ENCODE measurements at regions of chr2 and their contacts with region 1.

Region 1: DNA sequence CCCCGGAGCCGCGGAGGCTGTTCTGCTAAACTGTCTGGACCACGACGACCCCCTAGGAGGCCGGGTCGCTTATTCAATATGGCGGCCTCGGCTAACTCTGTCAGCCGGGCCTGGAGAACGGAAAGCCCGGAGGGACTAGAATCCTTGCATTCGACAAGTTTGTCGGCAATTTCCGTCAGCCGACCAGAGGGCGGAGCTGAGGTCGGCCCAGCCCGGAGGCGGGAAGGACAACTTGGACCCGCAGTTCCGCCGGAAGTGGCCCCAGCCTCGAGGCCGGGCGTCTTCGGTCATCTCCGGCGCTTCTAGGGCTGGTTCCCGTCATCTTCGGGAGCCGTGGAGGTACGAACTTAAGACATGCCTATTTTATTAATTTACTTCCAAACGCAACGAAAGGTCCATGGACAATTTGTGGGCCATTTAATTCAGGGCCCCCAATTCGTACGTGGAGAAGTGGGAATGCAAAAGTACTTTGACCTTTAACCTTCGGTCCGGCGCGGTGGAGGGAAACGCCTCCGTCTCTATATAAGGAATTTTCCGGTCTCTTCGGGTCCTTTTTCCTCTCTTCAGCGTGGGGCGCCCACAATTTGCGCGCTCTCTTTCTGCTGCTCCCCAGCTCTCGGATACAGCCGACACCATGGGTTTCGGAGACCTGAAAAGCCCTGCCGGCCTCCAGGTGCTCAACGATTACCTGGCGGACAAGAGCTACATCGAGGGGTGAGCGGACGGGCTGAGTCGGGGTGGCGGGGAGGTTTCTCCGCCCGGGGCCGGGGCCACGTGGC is at the starts of genes EEF1B2 and NDUFS1:
- DNase-seq: peak; percentile 99
- H3K4me3 ChIP-seq: peak within 1 kb of the TSS; percentile 72 to 97 (median 96)
- H3K27ac ChIP-seq: peak within 1 kb of the TSS; percentile 67
- H3K4me1 ChIP-seq: peaks cover 27% of the 10 kb centered on the region
- H3K27me3 ChIP-seq: no peaks in the 10 kb centered on the region
- CTCF ChIP-seq: no peak
- POLR2A ChIP-seq: peak; percentile 89
- total RNA-seq, gene EEF1B2: 558 and 576 TPM in 2 replicates
- total RNA-seq, gene NDUFS1: 93.2 and 95.5 TPM in 2 replicates

Region 2: GRCh38 chr2:205998583-205998982 is 161.0 kb before region 1 on chr2:
- CTCF ChIA-PET with region 1: no interaction called
- POLR2A ChIA-PET with region 1: no interaction called
- dilution Hi-C with region 1: no loop called
- intact Hi-C with region 1: loop called (anchors 2 kb)
- DNase-seq: no peak
- H3K4me3 ChIP-seq: no peak overlapping the region
- H3K27ac ChIP-seq: no peak overlapping the region
- H3K4me1 ChIP-seq: no peaks in the 10 kb centered on the region
- H3K27me3 ChIP-seq: no peaks in the 10 kb centered on the region
- CTCF ChIP-seq: no peak
- POLR2A ChIP-seq: no peak

Region 3: GRCh38 chr2:206260188-206261012 is 100.9 kb after region 1 on chr2:
- CTCF ChIA-PET with region 1: interaction called, 4 read pairs
- POLR2A ChIA-PET with region 1: no interaction called
- dilution Hi-C with region 1: no loop called
- intact Hi-C with region 1: loop called (anchors 1 kb)
- DNase-seq: no peak
- H3K4me3 ChIP-seq: no peak overlapping the region
- H3K27ac ChIP-seq: no peak overlapping the region
- H3K4me1 ChIP-seq: no peaks in the 10 kb centered on the region
- H3K27me3 ChIP-seq: peaks cover 72 to 88% of the 10 kb centered on the region in 2 experiments
- CTCF ChIP-seq: peak; percentile 8 to 27
- POLR2A ChIP-seq: no peak